WTC11 (cell line): ENCODE measurements at regions of chr2 and their contacts with region 1.

Region 1: DNA sequence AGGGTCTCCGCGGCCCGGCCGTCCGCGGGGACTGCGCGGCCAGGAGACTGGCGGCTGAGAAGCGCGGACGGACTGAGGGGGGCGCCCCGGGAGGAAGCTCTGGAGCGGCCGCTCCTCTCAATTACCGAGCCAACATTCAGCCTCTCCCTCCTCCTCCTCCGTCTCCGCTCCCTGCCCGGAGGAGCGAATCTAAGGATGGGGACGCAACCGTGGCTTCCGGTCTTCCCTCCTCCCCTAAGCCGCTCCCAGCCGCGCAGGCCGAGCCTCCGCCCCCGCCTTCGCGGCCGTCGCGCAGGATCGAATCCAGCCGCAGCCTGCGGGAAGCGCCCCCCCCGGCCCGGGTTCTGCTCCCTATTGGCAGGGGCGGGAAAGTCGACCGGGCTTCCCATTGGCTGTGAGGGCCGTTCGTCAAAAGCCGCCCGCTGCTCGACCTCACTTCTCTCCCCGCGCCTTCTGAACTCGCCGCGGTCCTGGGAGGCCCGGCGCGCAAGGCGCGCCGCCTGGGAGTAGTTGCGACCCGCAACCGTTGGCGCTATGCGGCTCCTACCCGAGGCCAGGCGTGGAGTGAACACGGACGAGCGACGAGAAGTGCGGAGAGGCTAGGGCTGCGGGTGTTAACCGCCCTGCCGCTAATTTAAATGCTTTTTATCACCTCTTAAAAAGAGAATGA is at the start of gene HNRNPLL:
- DNase-seq: peak; percentile 99
- ATAC-seq: peak; percentile 88
- H3K4me3 Mint-ChIP-seq: peak within 1 kb of the TSS; percentile 90
- H3K27ac Mint-ChIP-seq: peak within 1 kb of the TSS; percentile 96
- H3K4me1 Mint-ChIP-seq: peaks cover 48% of the 10 kb centered on the region
- H3K27me3 Mint-ChIP-seq: no peaks in the 10 kb centered on the region
- CTCF ChIP-seq: no peak
- total RNA-seq, gene HNRNPLL: 63.1 to 66.4 TPM (median 65.3 TPM) in 3 replicates

Region 2: DNA sequence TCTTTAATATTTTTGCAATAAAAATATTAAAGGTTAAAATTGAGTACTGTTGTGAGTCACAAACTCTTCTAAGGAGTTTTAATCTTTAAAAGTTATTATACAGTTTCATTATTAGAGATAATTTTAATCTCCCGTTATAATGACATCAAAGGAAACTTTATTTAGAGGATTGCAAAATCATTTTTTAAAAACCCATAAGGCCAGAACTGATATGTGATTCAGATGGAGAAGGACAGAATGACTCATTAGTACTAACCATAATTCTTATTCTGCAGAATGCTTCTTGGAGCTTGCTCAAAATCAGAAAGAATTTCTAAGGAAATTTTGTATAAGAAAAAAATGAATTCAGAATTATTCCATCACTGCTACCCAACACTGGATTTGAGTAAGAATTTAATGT is 12.4 kb after region 1 on chr2:
- CTCF ChIA-PET with region 1: interaction called, 17 read pairs
- POLR2A ChIA-PET with region 1: interaction called, 5 read pairs
- DNase-seq: no peak
- ATAC-seq: no peak
- H3K4me3 Mint-ChIP-seq: no peak overlapping the region
- H3K27ac Mint-ChIP-seq: no peak overlapping the region
- H3K4me1 Mint-ChIP-seq: peaks cover 24% of the 10 kb centered on the region
- H3K27me3 Mint-ChIP-seq: no peaks in the 10 kb centered on the region
- CTCF ChIP-seq: no peak

Region 3: GRCh38 chr2:38665854-38666555 is 63.1 kb after region 1 on chr2 and contains the start of gene GALM:
- CTCF ChIA-PET with region 1: interaction called, 13 read pairs
- POLR2A ChIA-PET with region 1: interaction called, 7 read pairs
- DNase-seq: peak; percentile 87
- ATAC-seq: peak; percentile 96
- H3K4me3 Mint-ChIP-seq: peak within 1 kb of the TSS; percentile 88
- H3K27ac Mint-ChIP-seq: peak within 1 kb of the TSS; percentile 73
- H3K4me1 Mint-ChIP-seq: peaks cover 25% of the 10 kb centered on the region
- H3K27me3 Mint-ChIP-seq: no peaks in the 10 kb centered on the region
- CTCF ChIP-seq: no peak
- total RNA-seq, gene GALM: 11.2 to 13.5 TPM (median 12.3 TPM) in 3 replicates

Region 4: GRCh38 chr2:38672445-38673391 is 69.9 kb after region 1 on chr2:
- CTCF ChIA-PET with region 1: interaction called, 13 read pairs
- POLR2A ChIA-PET with region 1: no interaction called
- DNase-seq: no peak
- ATAC-seq: no peak
- H3K4me3 Mint-ChIP-seq: no peak overlapping the region
- H3K27ac Mint-ChIP-seq: no peak overlapping the region; the same call in 1 of the 2 replicates
- H3K4me1 Mint-ChIP-seq: peaks cover 24% of the 10 kb centered on the region
- H3K27me3 Mint-ChIP-seq: no peaks in the 10 kb centered on the region
- CTCF ChIP-seq: no peak